Activated CD8-positive, alpha-beta T cell treated with anti-CD3 and anti-CD28 coated beads for 36 hours (primary cell): ENCODE measurements at regions of chr7 and their contacts with region 1.

Region 1: GRCh38 chr7:132333301-132333700 is 243.0 kb downstream of the PLXNA4 start:
- DNase-seq: no peak
- ATAC-seq: no peak
- H3K4me3 Mint-ChIP-seq: no peak overlapping the region
- H3K27ac Mint-ChIP-seq: no peak overlapping the region
- H3K4me1 Mint-ChIP-seq: no peaks in the 10 kb centered on the region
- H3K27me3 Mint-ChIP-seq: no peaks in the 10 kb centered on the region
- CTCF ChIP-seq: no peak

Region 2: DNA sequence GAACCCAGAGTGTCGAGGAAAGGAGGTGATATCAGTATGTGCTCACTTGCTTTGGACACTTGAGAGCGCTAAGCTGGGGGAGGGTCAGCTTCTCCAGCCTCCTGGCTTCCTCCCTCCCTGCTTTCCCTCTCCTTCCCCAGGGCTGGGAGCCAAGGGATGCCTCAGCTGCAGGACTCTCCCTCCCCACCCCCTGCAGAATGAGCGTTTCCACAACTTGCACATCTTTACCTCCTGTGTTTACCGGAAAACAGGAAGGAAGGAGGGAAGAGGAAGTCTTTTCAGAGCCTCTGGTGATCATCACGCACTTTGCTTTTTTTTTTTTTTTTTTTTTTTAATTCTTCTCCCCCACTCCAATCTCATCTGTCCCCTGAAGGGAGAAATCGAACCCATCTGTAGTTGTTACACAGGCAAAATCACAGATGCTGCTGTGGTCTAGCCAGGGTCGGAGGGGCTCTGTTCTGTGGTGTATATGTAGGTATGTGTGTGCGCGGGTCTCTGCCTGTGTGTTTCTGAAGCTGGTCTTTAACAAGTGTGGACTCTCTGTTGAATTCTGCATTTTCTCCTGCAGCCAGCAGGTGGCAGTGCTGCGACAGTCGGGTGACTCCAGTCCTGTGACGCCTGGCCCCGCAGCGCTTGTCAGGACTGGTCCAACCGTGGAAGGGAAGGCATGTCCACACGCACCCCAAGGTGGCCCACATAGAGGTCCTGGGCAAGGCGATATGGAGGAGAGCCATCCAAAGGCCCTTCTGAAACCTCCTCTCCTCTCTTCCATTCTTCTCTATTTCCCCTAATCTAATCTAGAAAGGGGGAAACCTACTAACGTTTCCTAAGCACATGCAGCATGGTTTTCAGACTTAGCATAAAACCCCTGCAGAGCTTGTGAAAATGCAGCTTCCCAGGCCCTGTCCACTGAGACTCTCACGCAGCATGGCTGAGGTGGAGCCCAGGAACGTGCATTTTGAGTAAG is 14.7 kb before region 1 on chr7:
- CTCF ChIA-PET with region 1: interaction called, 15 read pairs
- POLR2A ChIA-PET with region 1: no interaction called
- intact Hi-C with region 1: no loop called
- DNase-seq: peak; percentile 85
- ATAC-seq: peak; percentile 98
- H3K4me3 Mint-ChIP-seq: no peak overlapping the region
- H3K27ac Mint-ChIP-seq: no peak overlapping the region
- H3K4me1 Mint-ChIP-seq: peaks cover 7% of the 10 kb centered on the region
- H3K27me3 Mint-ChIP-seq: peaks cover 28% of the 10 kb centered on the region
- CTCF ChIP-seq: peak; percentile 85

Region 3: DNA sequence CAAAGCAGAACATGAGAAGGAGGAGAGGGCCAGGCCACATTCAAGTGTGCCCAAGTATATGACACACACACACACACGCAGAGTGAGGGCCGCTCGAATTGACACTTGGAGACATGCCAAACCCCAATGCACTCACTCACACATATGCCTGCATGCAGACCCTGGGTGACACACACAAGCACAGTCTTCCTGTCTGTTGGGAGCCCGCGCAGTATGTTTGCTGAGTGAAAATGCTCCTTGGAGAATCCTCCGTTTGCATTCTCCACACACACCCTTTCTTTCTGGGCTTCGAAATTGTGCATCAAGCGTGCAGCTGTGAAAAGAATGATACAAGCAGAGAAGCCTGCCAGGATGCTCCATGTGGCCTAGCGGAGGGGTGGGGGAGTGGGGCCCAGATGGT is 122.1 kb after region 1 on chr7:
- CTCF ChIA-PET with region 1: no interaction called
- POLR2A ChIA-PET with region 1: no interaction called
- intact Hi-C with region 1: no loop called
- DNase-seq: peak; percentile 67
- ATAC-seq: peak; percentile 65
- H3K4me3 Mint-ChIP-seq: no peak overlapping the region
- H3K27ac Mint-ChIP-seq: no peak overlapping the region
- H3K4me1 Mint-ChIP-seq: peaks cover 51% of the 10 kb centered on the region
- H3K27me3 Mint-ChIP-seq: no peaks in the 10 kb centered on the region
- CTCF ChIP-seq: no peak